ENCODE measurements at regions of chrX and their contacts with region 1.

Region 1: DNA sequence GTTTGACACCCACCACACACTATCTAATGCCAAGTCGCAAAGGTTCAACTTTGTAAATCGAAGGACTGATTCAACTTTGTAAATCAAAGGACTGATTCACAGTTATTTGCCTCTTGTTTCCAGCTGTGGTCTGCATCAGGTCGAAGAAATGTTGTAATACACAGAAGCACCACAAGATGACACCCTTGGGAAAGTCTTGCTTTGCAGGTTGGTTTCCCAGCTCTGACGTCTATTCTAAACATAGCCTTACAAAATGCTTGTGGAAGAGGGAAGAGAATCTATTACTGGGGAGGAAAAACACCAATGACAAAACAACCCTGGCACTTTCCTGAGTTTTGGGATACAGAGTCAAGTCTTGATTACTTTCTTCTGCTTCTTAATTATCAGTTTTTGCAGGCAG is 35.3 kb downstream of the SUPT20HL1 start:
- DNase-seq: peak; percentile 68
- H3K4me3 ChIP-seq: no peak overlapping the region
- H3K27ac ChIP-seq: no peak overlapping the region
- H3K4me1 ChIP-seq: peaks cover 30% of the 10 kb centered on the region
- H3K27me3 ChIP-seq: peaks cover 8% of the 10 kb centered on the region
- CTCF ChIP-seq: peak; percentile 84 to 90

Region 2: DNA sequence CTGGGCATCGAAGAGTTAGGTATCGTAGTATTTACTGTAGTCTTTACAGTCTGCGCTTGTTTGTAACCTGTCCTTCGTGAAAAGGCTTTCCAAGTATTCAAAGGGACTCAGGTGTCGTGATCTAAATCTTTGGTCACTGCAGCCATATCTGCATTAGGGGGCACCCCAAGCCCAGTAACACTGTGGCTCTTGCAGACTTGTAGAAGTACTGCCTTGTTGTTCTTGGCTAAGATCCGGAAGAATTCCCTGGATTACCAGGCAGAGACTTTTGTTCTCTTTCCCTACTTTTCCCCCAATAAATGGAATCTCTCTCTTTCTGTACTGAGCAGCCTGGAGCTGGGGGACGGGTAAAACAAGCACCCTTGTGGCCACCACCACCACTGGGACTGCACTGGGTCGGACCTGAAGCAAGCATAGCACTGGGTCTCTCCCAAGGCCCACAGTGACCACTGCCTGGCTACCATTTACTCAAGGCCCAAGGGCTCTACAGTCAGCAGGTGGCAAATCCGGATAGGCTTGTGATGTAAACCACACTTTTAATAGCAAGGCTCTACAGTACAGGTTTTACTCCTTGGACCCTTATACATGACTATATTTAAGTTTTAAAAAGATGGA is 476.0 kb before region 1 on chrX:
- CTCF ChIA-PET with region 1: no interaction called
- dilution Hi-C with region 1: no loop called
- in situ Hi-C with region 1: no loop called
- intact Hi-C with region 1: no loop called
- DNase-seq: no peak
- H3K4me3 ChIP-seq: no peak overlapping the region
- H3K27ac ChIP-seq: no peak overlapping the region
- H3K4me1 ChIP-seq: no peaks in the 10 kb centered on the region
- H3K27me3 ChIP-seq: no peaks in the 10 kb centered on the region
- CTCF ChIP-seq: no peak

Region 3: GRCh38 chrX:24259544-24260240 is 136.1 kb before region 1 on chrX:
- CTCF ChIA-PET with region 1: interaction called, 8 read pairs
- dilution Hi-C with region 1: no loop called
- in situ Hi-C with region 1: no loop called
- intact Hi-C with region 1: loop called (anchors 1 kb)
- DNase-seq: peak; percentile 64
- H3K4me3 ChIP-seq: no peak overlapping the region
- H3K27ac ChIP-seq: no peak overlapping the region
- H3K4me1 ChIP-seq: no peaks in the 10 kb centered on the region
- H3K27me3 ChIP-seq: no peaks in the 10 kb centered on the region
- CTCF ChIP-seq: peak; percentile 79 to 83

Region 4: GRCh38 chrX:24380262-24381187 is 15.2 kb before region 1 on chrX:
- CTCF ChIA-PET with region 1: interaction called, 17 read pairs
- dilution Hi-C with region 1: no loop called
- in situ Hi-C with region 1: no loop called
- intact Hi-C with region 1: no loop called
- DNase-seq: no peak
- H3K4me3 ChIP-seq: no peak overlapping the region
- H3K27ac ChIP-seq: no peak overlapping the region
- H3K4me1 ChIP-seq: no peaks in the 10 kb centered on the region
- H3K27me3 ChIP-seq: peaks cover 5% of the 10 kb centered on the region
- CTCF ChIP-seq: no peak

Region 5: GRCh38 chrX:24498975-24499374 is 103.2 kb after region 1 on chrX:
- CTCF ChIA-PET with region 1: interaction called, 31 read pairs
- dilution Hi-C with region 1: loop called (anchors 5 kb)
- in situ Hi-C with region 1: loop called (anchors 5 kb)
- intact Hi-C with region 1: loop called (anchors 1 kb)
- DNase-seq: peak; percentile 25
- H3K4me3 ChIP-seq: no peak overlapping the region
- H3K27ac ChIP-seq: no peak overlapping the region
- H3K4me1 ChIP-seq: no peaks in the 10 kb centered on the region
- H3K27me3 ChIP-seq: no peaks in the 10 kb centered on the region
- CTCF ChIP-seq: peak; percentile 63 to 66

Region 6: GRCh38 chrX:24542756-24543155 is 147.0 kb after region 1 on chrX:
- CTCF ChIA-PET with region 1: no interaction called
- dilution Hi-C with region 1: no loop called
- in situ Hi-C with region 1: no loop called
- intact Hi-C with region 1: no loop called
- DNase-seq: no peak
- H3K4me3 ChIP-seq: no peak overlapping the region
- H3K27ac ChIP-seq: no peak overlapping the region
- H3K4me1 ChIP-seq: no peaks in the 10 kb centered on the region
- H3K27me3 ChIP-seq: no peaks in the 10 kb centered on the region
- CTCF ChIP-seq: no peak

Region 7: GRCh38 chrX:24732766-24733500 is 337.2 kb after region 1 on chrX:
- CTCF ChIA-PET with region 1: no interaction called
- dilution Hi-C with region 1: no loop called
- in situ Hi-C with region 1: loop called in 1 of 2 experiments (anchors 25 kb)
- intact Hi-C with region 1: no loop called
- DNase-seq: no peak
- H3K4me3 ChIP-seq: no peak overlapping the region
- H3K27ac ChIP-seq: no peak overlapping the region
- H3K4me1 ChIP-seq: no peaks in the 10 kb centered on the region
- H3K27me3 ChIP-seq: no peaks in the 10 kb centered on the region
- CTCF ChIP-seq: no peak

Region 8: GRCh38 chrX:24799565-24799964 is 403.8 kb after region 1 on chrX:
- CTCF ChIA-PET with region 1: no interaction called
- dilution Hi-C with region 1: no loop called
- in situ Hi-C with region 1: no loop called
- intact Hi-C with region 1: no loop called
- DNase-seq: no peak
- H3K4me3 ChIP-seq: no peak overlapping the region
- H3K27ac ChIP-seq: no peak overlapping the region
- H3K4me1 ChIP-seq: no peaks in the 10 kb centered on the region
- H3K27me3 ChIP-seq: peaks cover 2% of the 10 kb centered on the region
- CTCF ChIP-seq: no peak

Region 9: DNA sequence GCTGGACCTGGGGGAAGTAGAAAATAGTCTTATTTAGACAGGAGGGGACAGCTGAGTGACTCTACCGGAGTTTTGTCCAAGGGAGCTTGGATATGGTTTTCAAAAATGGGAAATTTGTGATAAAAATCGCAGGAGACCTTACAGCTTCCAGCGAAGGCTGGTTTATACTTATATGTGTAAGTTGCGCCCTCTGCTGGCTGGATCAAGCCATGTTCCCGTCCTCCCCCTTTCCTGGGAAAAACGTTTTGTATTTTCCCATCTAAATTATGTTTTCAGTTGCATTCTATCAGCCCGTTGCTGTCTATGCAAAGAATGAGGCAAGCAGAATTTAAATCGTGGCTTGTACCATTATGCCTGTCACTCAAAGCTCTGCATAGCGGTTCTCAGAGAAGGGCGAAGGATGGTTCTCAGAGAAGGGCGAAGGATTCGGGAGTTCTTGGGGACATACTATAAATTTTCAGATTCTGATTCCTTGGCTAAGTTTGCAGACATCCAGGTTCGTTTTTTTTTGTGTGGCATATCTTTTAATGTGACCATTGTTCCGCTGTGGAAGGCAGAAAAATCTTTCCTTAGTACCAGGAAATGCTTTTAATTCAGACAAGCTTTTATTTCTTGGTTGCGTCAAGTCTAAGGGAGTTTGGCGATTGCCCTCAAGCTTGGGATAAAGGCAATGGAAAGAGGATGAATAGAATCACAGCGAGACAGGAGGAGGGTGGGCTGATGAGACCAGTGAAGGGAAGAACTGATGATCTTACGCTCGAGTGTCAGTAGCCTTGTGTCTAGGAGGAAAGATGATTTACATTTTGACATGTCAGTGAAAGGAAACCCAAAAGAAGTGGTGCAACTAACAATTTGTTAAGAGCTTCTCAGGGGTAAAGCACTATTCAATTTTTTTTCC is 748.5 kb after region 1 on chrX:
- CTCF ChIA-PET with region 1: no interaction called
- dilution Hi-C with region 1: no loop called
- in situ Hi-C with region 1: loop called in 1 of 2 experiments (anchors 25 kb)
- intact Hi-C with region 1: loop called (anchors 5 kb)
- DNase-seq: peak; percentile 15
- H3K4me3 ChIP-seq: no peak overlapping the region
- H3K27ac ChIP-seq: no peak overlapping the region
- H3K4me1 ChIP-seq: no peaks in the 10 kb centered on the region
- H3K27me3 ChIP-seq: no peaks in the 10 kb centered on the region
- CTCF ChIP-seq: peak; percentile 70 to 80

Measured in mammary epithelial cell (primary cell).